Activated naive CD4-positive, alpha-beta T cell treated with anti-CD3 and anti-CD28 coated beads for 36 hours (primary cell): ENCODE measurements at regions of chr9 and their contacts with region 1.

Region 1: GRCh38 chr9:105694190-105694847 is at the start of gene TMEM38B:
- DNase-seq: peak; percentile 76
- H3K4me3 Mint-ChIP-seq: peak within 1 kb of the TSS; percentile 90
- H3K27ac Mint-ChIP-seq: peak within 1 kb of the TSS; percentile 75
- H3K4me1 Mint-ChIP-seq: peaks cover 33% of the 10 kb centered on the region
- H3K27me3 Mint-ChIP-seq: peaks cover 10% of the 10 kb centered on the region
- total RNA-seq, gene TMEM38B: 17.6 TPM

Region 2: GRCh38 chr9:104093647-104094533 is 1600.4 kb before region 1 on chr9 and contains the start of gene SMC2:
- CTCF ChIA-PET with region 1: no interaction called
- intact Hi-C with region 1: loop called (anchors 2 kb)
- DNase-seq: peak; percentile 93
- H3K4me3 Mint-ChIP-seq: peak within 1 kb of the TSS; percentile 99
- H3K27ac Mint-ChIP-seq: peak within 1 kb of the TSS; percentile 95
- H3K4me1 Mint-ChIP-seq: peaks cover 35% of the 10 kb centered on the region
- H3K27me3 Mint-ChIP-seq: no peaks in the 10 kb centered on the region
- total RNA-seq, gene SMC2: 62.0 to 63.8 TPM

Region 3: GRCh38 chr9:105157130-105157583 is 537.2 kb before region 1 on chr9:
- CTCF ChIA-PET with region 1: no interaction called
- intact Hi-C with region 1: loop called (anchors 5 kb)
- DNase-seq: peak; percentile 46
- H3K4me3 Mint-ChIP-seq: no peak overlapping the region
- H3K27ac Mint-ChIP-seq: no peak overlapping the region
- H3K4me1 Mint-ChIP-seq: peaks cover 16% of the 10 kb centered on the region
- H3K27me3 Mint-ChIP-seq: no peaks in the 10 kb centered on the region

Region 4: DNA sequence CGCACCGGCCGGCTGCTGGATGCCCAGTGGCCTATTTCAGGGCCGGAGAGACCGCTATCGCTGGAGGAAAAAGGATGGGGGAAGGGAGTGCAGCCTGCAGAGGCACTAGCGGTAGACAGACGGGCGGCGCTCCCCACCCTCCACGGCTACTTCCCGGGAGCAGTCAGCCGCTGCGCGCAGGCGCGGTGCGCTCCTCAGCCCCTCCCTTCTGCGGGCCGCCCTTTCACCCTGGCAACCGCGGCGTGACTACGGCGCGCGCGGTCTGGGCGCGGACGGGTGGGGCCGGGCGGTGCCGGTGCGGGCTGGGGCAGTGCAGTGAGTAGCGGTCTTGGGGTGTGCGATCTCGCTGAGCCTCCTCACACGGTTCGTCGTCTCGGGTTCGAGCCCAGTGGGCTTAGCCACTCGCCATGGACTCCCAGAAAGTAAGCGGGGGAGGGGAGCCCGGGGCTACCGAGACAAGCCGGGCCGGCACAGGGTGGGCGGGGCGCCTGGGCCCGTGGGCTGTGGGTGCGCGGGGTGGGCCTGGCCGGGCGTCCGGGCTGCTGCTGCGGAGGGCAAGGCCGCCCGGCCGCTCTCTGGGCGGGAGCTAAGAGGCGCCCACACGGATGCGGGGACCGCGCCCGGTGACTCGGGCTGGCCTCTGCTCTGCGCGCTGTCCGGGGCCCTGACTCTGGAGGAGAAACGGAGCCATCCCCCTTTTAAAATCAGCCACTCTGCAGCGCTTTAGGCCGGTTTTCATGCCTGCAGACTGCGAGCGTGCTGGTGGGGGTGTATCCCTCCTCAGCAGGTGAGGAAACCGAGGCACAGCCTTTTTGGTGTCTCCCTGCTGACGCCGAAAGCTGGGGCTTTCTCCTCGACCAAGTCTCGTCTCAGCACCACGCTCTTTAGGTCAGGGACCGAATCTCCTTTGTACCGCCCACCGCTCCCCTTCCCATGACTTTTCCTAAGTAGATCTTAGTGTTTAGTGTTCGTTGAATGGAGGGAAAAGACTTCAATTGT is 246.2 kb before region 1 on chr9 and contains the start of gene FSD1L:
- CTCF ChIA-PET with region 1: no interaction called
- intact Hi-C with region 1: loop called (anchors 1 kb)
- DNase-seq: peak; percentile 87
- H3K4me3 Mint-ChIP-seq: peak within 1 kb of the TSS; percentile 79
- H3K27ac Mint-ChIP-seq: no peak within 1 kb of the TSS
- H3K4me1 Mint-ChIP-seq: peaks cover 10% of the 10 kb centered on the region
- H3K27me3 Mint-ChIP-seq: no peaks in the 10 kb centered on the region
- total RNA-seq, gene FSD1L: 0.79 to 0.86 TPM

Region 5: DNA sequence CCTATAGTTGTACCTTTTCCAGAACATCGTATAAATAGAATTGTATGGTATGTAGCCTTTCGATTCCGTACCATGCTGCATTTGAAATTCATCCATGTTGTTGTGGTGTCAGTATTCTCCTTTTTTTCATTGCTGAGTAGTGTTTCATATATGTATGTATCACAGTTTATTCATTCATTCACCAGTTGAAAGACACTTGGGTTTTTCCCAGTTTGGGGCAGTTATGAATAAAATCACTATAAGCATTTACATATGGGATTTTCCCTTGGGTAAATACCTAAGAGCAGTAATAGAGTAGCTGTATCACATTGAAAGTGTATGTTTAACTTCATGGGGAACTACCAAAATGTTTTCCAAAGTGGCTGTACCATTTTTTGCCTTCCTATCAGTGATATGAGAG is 152.5 kb before region 1 on chr9:
- CTCF ChIA-PET with region 1: no interaction called
- intact Hi-C with region 1: loop called (anchors 1 kb)
- DNase-seq: no peak
- H3K4me3 Mint-ChIP-seq: no peak overlapping the region
- H3K27ac Mint-ChIP-seq: no peak overlapping the region
- H3K4me1 Mint-ChIP-seq: peaks cover 9% of the 10 kb centered on the region
- H3K27me3 Mint-ChIP-seq: peaks cover 7% of the 10 kb centered on the region

Region 6: GRCh38 chr9:105557771-105558610 is 136.3 kb before region 1 on chr9 and contains the start of gene FKTN:
- CTCF ChIA-PET with region 1: no interaction called
- intact Hi-C with region 1: loop called (anchors 1 kb)
- DNase-seq: peak; percentile 88
- H3K4me3 Mint-ChIP-seq: peak within 1 kb of the TSS; percentile 85
- H3K27ac Mint-ChIP-seq: peak within 1 kb of the TSS; percentile 77
- H3K4me1 Mint-ChIP-seq: peaks cover 16% of the 10 kb centered on the region
- H3K27me3 Mint-ChIP-seq: no peaks in the 10 kb centered on the region
- total RNA-seq, gene FKTN: 8.0 to 9.6 TPM

Region 7: GRCh38 chr9:105656131-105656921 is 38.0 kb before region 1 on chr9:
- CTCF ChIA-PET with region 1: interaction called, 3 read pairs
- intact Hi-C with region 1: loop called (anchors 1 kb)
- DNase-seq: peak; percentile 33
- H3K4me3 Mint-ChIP-seq: peak overlapping the region; percentile 67
- H3K27ac Mint-ChIP-seq: no peak overlapping the region
- H3K4me1 Mint-ChIP-seq: peaks cover 7% of the 10 kb centered on the region
- H3K27me3 Mint-ChIP-seq: peaks cover 34% of the 10 kb centered on the region

Region 8: DNA sequence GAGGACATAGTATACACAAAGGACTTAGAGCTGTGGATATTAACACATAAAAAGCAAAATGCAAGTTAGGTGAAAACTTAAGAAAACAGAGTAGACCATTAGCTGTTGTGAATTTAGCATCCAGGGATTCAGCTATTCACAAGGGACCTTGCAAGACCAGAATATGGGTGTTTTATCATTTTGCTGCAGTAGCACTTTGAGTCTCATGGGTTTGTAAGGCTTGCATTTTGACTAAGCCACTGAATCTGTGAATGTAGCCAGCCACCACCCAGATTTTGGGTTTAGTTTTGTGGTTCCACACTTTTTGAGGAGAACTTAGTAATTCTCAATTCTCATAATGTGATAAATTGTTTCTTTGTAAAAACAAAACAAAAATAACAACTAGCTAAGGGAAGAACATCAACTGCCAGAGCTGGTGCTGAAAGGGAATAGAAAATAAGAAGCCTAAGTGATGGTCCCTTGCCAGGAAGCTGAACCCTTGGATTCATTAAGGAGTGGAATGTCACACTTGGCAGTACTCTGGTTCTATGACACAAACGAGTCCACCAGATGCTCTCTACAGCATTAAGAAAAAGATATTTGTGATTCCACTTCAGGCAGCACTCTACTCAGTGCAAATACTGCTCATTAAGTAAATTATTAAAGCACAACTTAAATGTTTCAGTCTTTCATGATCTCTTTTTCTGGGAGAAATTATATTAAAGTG is 611.3 kb after region 1 on chr9:
- CTCF ChIA-PET with region 1: no interaction called
- intact Hi-C with region 1: no loop called
- DNase-seq: no peak
- H3K4me3 Mint-ChIP-seq: no peak overlapping the region
- H3K27ac Mint-ChIP-seq: no peak overlapping the region
- H3K4me1 Mint-ChIP-seq: no peaks in the 10 kb centered on the region
- H3K27me3 Mint-ChIP-seq: no peaks in the 10 kb centered on the region

Region 9: DNA sequence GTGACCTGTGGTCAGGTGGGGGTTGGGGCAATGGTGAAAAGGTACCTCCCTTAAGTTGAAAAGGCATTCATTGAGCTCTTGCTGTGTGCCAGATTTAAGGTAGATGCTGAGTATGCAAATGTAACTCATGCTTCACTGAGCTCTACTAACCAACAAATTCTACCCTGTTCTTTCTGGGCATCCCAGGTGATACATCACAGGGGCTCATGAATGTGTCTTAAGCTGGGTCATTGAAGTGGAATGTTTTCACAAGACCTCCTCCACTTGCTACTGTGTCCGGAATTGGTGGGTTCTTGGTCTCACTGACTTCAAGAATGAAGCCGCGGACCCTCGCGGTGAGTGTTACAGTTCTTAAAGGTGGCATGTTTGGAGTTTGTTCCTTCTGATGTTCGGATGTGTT is 805.9 kb after region 1 on chr9:
- CTCF ChIA-PET with region 1: no interaction called
- intact Hi-C with region 1: no loop called
- DNase-seq: no peak
- H3K4me3 Mint-ChIP-seq: no peak overlapping the region
- H3K27ac Mint-ChIP-seq: no peak overlapping the region
- H3K4me1 Mint-ChIP-seq: no peaks in the 10 kb centered on the region
- H3K27me3 Mint-ChIP-seq: no peaks in the 10 kb centered on the region

Region 10: GRCh38 chr9:107309271-107309670 is 1615.0 kb after region 1 on chr9:
- CTCF ChIA-PET with region 1: no interaction called
- intact Hi-C with region 1: no loop called
- DNase-seq: no peak
- H3K4me3 Mint-ChIP-seq: no peak overlapping the region
- H3K27ac Mint-ChIP-seq: no peak overlapping the region
- H3K4me1 Mint-ChIP-seq: peaks cover 61% of the 10 kb centered on the region
- H3K27me3 Mint-ChIP-seq: no peaks in the 10 kb centered on the region